Cardiac septum (tissue), 1 donor: ENCODE measurements at regions of chr1 and their contacts with region 1.

Region 1: GRCh38 chr1:226702957-226703831 is 35.9 kb downstream of the ITPKB start:
- DNase-seq: peak; percentile 90

Region 2: DNA sequence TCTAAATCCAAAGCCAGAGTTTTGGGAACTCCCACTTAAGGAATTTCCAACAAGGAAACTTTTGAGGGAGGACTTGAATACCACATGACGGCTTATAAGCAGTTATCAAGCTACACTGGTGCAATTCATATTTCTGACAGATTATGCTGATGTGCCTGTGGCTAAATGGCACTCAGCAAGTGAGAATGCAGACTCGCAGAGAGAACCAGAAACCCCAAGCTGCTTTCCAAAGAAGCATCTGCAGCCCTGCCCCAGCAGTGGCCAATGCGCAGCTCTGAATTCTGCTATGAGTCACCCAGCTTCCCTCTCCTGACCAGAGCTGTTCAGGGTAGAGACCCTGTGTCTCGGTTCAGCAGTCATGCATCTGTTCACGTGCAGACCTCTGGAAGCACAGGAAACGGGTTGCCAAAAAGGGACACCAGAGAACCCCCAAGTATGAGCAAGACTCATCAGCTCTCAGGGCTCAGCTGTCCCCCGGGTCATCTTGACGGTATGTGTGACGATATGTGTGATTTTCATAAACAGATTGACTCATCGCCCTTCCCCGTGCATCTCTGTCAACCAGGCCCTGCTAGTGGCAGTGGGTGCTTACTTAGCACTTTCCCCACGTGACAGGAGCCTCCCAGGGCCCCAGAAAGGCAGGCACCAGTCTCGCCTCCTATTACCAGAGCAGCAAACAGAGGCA is 40.4 kb before region 1 on chr1:
- intact Hi-C with region 1: loop called (anchors 2 kb)
- DNase-seq: peak; percentile 86

Region 3: DNA sequence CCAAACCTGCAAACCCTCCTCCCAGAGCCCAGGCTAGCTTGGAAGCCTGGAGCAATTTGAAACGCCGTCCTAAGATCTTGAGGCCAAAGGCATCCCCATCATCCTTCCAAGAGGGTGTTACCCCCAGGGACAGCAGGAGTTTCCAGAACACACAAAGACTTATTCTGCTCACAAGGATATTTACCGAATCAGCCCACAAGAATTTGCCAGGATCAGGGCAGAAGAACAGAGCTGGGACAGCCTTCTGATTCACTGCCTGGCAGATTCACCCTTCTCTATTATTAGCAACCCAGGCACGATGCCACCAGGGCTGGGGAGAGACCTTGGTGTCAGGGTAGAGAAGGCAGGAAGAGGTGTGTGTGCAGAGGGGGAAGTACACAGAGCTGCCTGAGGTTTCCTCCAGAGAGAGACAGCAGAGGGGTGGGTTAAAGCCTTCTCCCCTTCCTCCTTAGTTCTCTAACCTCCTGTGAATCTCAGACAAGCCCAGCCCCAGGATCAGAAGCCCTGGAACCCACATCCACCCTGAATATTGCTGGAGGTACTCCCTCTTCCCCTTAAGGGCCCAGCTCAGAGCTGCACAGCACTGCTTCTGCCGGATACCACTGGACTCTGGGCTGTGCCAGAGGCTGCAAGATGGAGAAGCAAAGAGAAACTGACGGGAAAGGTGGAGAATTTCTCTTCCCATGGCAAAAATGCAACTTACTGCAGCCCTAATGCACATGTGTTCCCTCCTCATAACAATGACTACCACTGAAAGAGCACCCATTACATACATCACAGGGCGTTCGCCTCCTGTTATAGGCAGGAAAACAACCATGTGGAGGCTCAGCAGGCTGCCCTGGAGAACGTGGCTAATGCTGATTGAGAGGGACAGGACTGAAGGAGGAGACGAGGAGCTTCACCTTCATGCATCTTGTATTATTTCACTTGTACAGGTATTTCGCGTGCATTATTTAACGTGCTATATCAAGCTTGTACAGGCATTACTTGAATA is 25.9 kb before region 1 on chr1:
- intact Hi-C with region 1: loop called (anchors 2 kb)
- DNase-seq: peak; percentile 92